Aorta (tissue), 5 donors: ENCODE measurements at regions of chr11 and their contacts with region 1.

Region 1: DNA sequence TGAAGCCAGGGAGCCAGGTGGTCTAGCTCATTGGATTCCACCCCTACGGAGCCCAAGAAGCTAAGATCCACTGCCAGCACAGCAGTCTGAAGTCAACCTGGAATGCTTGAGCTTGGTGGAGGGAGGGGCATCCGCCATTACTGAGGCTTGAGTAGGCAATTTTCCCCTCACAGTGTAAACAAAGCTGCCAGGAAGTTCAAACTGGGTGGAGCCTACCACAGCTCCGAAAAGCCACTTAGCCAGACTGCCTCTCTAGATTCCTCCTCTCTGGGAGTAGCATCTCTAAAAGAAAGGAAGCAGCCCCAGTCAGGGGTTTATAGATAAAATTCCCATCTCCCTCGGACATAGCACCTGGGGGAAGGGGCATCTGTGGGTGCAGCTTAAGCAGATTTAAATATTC is 620.3 kb downstream of the NELL1 start:
- DNase-seq: no peak
- ATAC-seq: no peak
- H3K4me3 ChIP-seq: no peak overlapping the region
- H3K27ac ChIP-seq: no peak overlapping the region
- H3K4me1 ChIP-seq: no peaks in the 10 kb centered on the region
- H3K27me3 ChIP-seq: no peaks in the 10 kb centered on the region

Region 2: GRCh38 chr11:21225858-21226257 is 63.8 kb before region 1 on chr11:
- intact Hi-C with region 1: loop called in 1 of 2 experiments (anchors 2 kb)
- DNase-seq: no peak
- ATAC-seq: no peak
- H3K4me3 ChIP-seq: no peak overlapping the region
- H3K27ac ChIP-seq: no peak overlapping the region
- H3K4me1 ChIP-seq: no peaks in the 10 kb centered on the region
- H3K27me3 ChIP-seq: no peaks in the 10 kb centered on the region

Region 3: DNA sequence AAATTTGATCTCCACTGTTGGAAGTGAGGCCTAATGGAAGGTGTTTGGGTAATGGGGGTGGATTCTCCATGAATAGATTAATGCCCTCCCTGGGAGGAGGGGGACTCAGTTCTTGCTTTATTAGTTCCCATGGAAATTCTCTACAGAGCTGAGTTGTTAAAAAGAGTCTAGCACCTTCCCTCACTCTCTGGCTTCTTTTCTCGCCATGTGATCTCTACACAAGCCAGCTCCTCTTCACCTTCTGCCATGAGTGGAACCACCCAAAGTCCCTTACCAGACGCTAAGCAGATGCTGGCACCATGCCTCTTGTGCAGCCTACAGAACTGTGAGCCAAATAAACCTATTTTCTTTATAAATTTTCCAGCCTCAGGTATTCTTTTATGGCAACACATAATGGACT is 437.4 kb after region 1 on chr11:
- intact Hi-C with region 1: no loop called
- DNase-seq: no peak
- ATAC-seq: no peak
- H3K4me3 ChIP-seq: no peak overlapping the region
- H3K27ac ChIP-seq: no peak overlapping the region
- H3K4me1 ChIP-seq: no peaks in the 10 kb centered on the region
- H3K27me3 ChIP-seq: no peaks in the 10 kb centered on the region